A549 (cell line): ENCODE measurements at regions of chr19 and their contacts with region 1.

Region 1: GRCh38 chr19:54137086-54137921 is at the start of gene CNOT3:
- DNase-seq: peak; percentile 100
- ATAC-seq: peak; percentile 79 to 92
- H3K4me3 ChIP-seq: peak within 1 kb of the TSS; percentile 84
- H3K27ac ChIP-seq: peak within 1 kb of the TSS; percentile 94 to 95
- H3K4me1 ChIP-seq: peaks cover 15% of the 10 kb centered on the region; the same call in 2 of the 3 replicates
- CTCF ChIP-seq: no peak
- EP300 ChIP-seq: no peak
- POLR2A ChIP-seq: peak; percentile 83
- RAD21 ChIP-seq: no peak
- polyA plus RNA-seq, gene CNOT3: 24.9 and 28.3 TPM in 2 replicates

Region 2: DNA sequence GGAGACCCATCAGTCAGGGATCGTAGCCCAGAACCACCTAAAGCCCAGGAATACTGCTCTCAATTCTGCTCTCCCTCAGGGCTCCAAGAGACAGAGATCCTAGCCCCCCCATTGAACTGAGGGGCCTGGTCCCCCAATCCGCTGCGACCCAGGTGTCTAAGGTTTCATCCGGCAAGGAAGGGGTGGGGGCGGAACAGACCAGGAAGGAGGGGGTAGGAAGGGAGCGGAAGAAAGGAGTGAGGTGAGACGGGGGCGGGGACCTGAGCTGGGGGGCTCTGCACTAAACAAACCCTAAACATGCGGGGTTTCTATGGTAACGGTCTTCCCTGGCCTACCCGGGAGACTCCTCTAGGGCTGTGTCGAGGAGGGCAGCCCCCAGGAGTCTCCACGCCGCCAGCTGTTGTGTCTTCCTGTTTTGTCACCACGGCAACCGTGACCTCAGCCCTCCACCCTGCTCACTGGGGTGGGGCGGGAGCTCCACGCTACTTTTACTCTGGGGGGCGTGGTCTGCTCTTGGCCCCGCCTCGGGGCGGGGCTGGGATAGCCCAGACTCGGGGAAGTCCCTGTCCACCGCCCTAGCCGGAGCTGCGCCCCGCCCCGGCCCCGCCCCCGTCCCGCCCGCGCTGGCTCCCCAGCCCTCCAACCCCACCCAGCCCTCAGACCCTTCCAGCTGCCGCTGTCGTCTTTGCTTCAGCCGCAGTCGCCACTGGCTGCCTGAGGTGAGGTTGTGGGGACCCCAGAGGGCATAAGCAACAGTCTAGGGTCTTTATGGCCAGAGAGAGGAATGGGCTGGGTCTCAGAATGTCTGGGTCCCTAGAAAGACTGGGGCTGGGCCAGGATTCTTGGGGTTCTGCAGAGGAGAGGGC is 269.8 kb before region 1 on chr19 and contains the start of gene MYADM:
- CTCF ChIA-PET with region 1: no interaction called
- POLR2A ChIA-PET with region 1: interaction called, 11 read pairs
- DNase-seq: peak; percentile 99 to 100
- ATAC-seq: peak; percentile 48 to 57
- H3K4me3 ChIP-seq: peak within 1 kb of the TSS; percentile 69
- H3K27ac ChIP-seq: peak within 1 kb of the TSS; percentile 94
- H3K4me1 ChIP-seq: peaks cover 34% of the 10 kb centered on the region
- CTCF ChIP-seq: no peak
- EP300 ChIP-seq: peak in 1 of 2 experiments; percentile 57; a peak in 1 of 5 replicates
- POLR2A ChIP-seq: peak; percentile 66
- RAD21 ChIP-seq: no peak
- polyA plus RNA-seq, gene MYADM: 37.7 and 56.1 TPM in 2 replicates

Region 3: DNA sequence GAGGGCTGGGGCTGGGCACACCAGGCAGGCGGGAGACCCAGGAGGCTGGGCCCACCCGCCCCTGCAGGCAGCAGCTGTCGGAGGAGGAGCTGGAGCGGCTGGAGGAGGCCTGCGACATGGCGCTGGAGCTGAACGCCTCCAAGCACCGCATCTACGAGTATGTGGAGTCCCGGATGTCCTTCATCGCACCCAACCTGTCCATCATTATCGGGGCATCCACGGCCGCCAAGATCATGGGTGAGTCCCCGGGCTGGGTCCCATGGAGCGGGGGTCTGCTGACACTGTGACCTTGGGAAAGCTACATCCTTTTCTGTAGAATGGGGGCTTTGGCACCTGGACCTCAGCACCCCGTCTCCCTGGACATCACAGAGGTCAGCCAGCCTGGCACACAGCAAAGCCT is 13.6 kb before region 1 on chr19:
- CTCF ChIA-PET with region 1: interaction called, 8 read pairs
- POLR2A ChIA-PET with region 1: interaction called, 10 read pairs
- DNase-seq: no peak
- ATAC-seq: no peak
- H3K4me3 ChIP-seq: no peak overlapping the region
- H3K27ac ChIP-seq: no peak overlapping the region
- H3K4me1 ChIP-seq: no peaks in the 10 kb centered on the region
- CTCF ChIP-seq: no peak
- EP300 ChIP-seq: no peak
- POLR2A ChIP-seq: no peak
- RAD21 ChIP-seq: no peak

Region 4: DNA sequence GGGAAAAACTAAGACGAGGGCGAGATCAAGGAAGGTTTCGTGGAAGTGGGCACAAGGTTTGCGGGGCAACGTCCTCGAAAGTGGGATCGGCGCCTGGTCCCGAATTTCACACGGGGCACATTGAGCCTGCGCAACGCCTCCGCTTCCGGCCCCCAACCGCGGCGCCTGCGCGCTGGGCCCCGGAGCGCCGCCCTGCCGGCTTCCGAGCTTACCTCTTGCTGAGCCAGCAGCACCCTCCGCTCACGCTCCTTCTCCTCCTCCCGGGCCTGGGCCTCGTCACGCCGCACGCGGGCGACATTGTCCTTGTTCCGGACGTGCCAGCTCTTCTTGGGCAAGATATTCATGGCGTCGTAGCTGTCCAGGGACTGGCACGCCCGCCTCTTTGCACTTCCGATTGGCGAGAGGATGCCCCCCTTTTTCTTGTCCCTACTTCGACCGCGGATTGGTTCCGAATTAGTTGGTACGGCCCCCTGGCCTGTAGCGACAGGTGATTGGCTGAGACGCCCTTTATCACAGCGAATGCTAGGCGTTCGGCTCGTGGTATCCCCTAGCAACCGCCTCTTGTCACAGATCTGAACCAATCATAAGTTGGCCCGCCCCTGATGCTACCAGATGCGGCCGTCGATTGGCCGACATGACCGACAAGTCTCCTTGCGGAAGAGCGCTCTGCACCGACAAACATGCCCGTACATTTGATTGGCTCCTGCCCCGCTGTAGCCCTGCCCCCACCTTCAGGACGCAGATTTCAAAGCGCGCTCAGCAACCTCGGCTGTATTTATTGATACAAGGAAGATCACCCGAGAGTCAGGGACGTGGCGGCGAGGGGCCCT is 22.3 kb after region 1 on chr19 and contains the start of gene LENG1:
- CTCF ChIA-PET with region 1: interaction called, 7 read pairs
- POLR2A ChIA-PET with region 1: interaction called, 37 read pairs
- DNase-seq: peak; percentile 100
- ATAC-seq: peak; percentile 77 to 90
- H3K4me3 ChIP-seq: peak within 1 kb of the TSS; percentile 56
- H3K27ac ChIP-seq: peak within 1 kb of the TSS; percentile 93 to 95
- H3K4me1 ChIP-seq: peaks cover 31% of the 10 kb centered on the region
- CTCF ChIP-seq: no peak
- EP300 ChIP-seq: no peak
- POLR2A ChIP-seq: peak; percentile 82
- RAD21 ChIP-seq: no peak
- polyA plus RNA-seq, gene LENG1: 6.8 and 13.3 TPM in 2 replicates

Region 5: DNA sequence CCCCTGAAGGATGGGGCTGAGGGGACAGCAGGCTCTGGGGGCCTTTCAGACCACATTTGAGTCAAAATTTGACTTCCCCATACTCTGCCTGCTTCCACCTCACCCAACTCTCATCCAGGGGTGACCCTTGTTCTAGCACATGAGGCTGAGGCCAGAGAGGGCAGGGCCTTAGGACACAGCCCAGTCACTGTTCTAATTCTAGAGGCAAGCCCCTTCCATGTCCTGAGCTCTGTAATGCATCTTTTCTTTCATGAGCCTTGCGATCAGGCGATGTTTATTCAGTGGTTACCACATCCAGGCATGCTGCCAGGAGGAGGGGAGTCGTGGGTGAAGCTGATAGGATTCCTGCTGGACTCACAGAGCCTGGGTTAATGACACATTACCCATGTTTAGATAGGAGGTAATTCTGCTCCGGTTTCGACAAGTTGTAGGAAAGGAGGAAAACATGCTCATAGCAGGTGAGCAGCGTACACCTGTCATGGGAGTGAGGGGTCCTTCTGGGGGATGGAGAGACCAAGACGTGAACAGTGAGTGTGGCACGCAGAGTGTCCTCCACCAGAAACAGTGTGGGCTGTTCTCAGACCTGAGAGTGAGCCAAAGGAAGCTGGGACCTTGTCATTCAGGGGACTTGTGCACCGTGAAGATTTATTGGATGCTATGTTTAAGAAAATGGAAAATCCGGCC is 72.6 kb after region 1 on chr19:
- CTCF ChIA-PET with region 1: no interaction called
- POLR2A ChIA-PET with region 1: interaction called, 14 read pairs
- DNase-seq: peak; percentile 90 to 93
- ATAC-seq: peak; percentile 60 to 74
- H3K4me3 ChIP-seq: 0 out of 3 replicates have a peak overlapping the region, but pooled peaks have one; percentile 5
- H3K27ac ChIP-seq: peak overlapping the region; percentile 31 to 68; a peak in 5 of 6 replicates
- H3K4me1 ChIP-seq: peaks cover 64% of the 10 kb centered on the region
- CTCF ChIP-seq: no peak
- EP300 ChIP-seq: no peak
- POLR2A ChIP-seq: no peak
- RAD21 ChIP-seq: no peak